T-cell (primary cell): ENCODE measurements at regions of chr4 and their contacts with region 1.

Region 1: DNA sequence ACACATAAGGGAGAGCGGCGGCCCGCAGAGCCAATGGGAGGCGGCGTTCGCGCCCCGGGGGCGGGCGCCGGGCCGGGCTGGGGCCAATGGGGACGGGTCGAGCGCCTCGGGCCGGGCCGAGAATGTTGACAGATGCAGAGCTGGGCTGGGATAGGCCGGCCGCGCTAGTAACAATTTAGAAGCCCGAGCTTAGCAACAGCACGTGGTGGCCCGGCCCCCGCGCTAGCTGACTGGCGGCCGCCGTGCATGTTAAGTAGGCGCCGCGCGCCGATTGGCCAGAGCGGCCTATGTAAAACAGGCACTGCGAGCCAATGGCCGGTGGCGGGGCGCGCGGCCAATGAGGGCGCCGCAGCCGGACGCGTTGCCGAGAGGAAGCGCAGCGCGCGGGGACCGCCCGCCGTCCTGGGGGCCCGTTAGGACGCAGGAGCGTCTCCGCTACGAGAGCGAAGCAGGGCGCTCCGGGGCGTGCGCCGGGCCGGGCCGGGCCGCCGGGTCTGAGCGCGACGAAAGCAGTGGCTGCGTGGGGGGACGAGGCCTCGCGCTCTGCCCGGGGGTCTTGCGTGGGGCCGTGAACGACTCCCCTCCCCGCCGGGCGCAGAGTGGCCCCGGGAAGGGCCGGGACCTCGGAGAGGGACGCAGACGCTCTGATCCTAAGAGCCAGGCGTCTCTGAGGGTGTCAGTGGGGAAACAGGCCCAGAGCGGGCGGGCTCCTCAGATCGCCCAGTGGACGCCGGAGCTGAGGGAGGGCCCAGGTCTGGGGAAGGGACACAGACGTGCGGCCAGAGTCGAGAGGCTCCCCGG is 434 bp upstream of the MXD4 start:
- DNase-seq: peak; percentile 96 to 100 (median 98)
- ATAC-seq: peak; percentile 89 to 90 (median 90)
- H3K4me3 ChIP-seq: peak overlapping the region; percentile 53 to 69
- H3K4me3 Mint-ChIP-seq: peak overlapping the region; percentile 68 to 77 (median 68)
- H3K27ac ChIP-seq: peak overlapping the region; percentile 91
- H3K27ac Mint-ChIP-seq: peak overlapping the region; percentile 67 to 82
- H3K4me1 ChIP-seq: peaks cover 6 to 51% of the 10 kb centered on the region in 2 experiments
- H3K4me1 Mint-ChIP-seq: peaks cover 0 to 15% (median 14%) of the 10 kb centered on the region in 3 donors
- H3K27me3 ChIP-seq: no peaks in the 10 kb centered on the region
- H3K27me3 Mint-ChIP-seq: no peaks in the 10 kb centered on the region

Region 2: GRCh38 chr4:2241410-2242353 is 20.7 kb before region 1 on chr4 and contains the starts of genes HAUS3 and POLN:
- CTCF ChIA-PET with region 1: interaction called in 1 of 2 experiments, 5 read pairs
- POLR2A ChIA-PET with region 1: interaction called in 1 of 2 experiments, 14 read pairs
- DNase-seq: peak; percentile 95 to 100 (median 98)
- ATAC-seq: peak; percentile 88 to 97 (median 94)
- H3K4me3 ChIP-seq: peak within 1 kb of the TSS; percentile 89 to 95
- H3K4me3 Mint-ChIP-seq: peak within 1 kb of the TSS; percentile 87 to 93 (median 92)
- H3K27ac ChIP-seq: peak within 1 kb of the TSS; percentile 77
- H3K27ac Mint-ChIP-seq: peak within 1 kb of the TSS; percentile 83 to 85
- H3K4me1 ChIP-seq: peaks cover 19 to 27% of the 10 kb centered on the region in 2 experiments
- H3K4me1 Mint-ChIP-seq: peaks cover 57 to 66% (median 63%) of the 10 kb centered on the region in 3 donors
- H3K27me3 ChIP-seq: no peaks in the 10 kb centered on the region
- H3K27me3 Mint-ChIP-seq: no peaks in the 10 kb centered on the region
- total RNA-seq, gene HAUS3: 29.3 to 94.0 (median 31.2) TPM
- total RNA-seq, gene POLN: 2.5 to 3.7 (median 2.7) TPM

Region 3: GRCh38 chr4:2281575-2282343 is 19.4 kb after region 1 on chr4:
- CTCF ChIA-PET with region 1: interaction called in 1 of 2 experiments, 17 read pairs
- POLR2A ChIA-PET with region 1: interaction called in 1 of 2 experiments, 11 read pairs
- DNase-seq: peak; percentile 59 to 97 (median 90)
- ATAC-seq: peak; percentile 93 to 97 (median 96)
- H3K4me3 ChIP-seq: peak overlapping the region in 1 of 2 donors; percentile 18
- H3K4me3 Mint-ChIP-seq: peak overlapping the region; percentile 52 to 82 (median 65)
- H3K27ac ChIP-seq: peak overlapping the region; percentile 96
- H3K27ac Mint-ChIP-seq: peak overlapping the region; percentile 98 to 99
- H3K4me1 ChIP-seq: peaks cover 20 to 63% of the 10 kb centered on the region in 2 experiments
- H3K4me1 Mint-ChIP-seq: peaks cover 34 to 56% (median 49%) of the 10 kb centered on the region in 3 donors
- H3K27me3 ChIP-seq: no peaks in the 10 kb centered on the region
- H3K27me3 Mint-ChIP-seq: no peaks in the 10 kb centered on the region

Region 4: DNA sequence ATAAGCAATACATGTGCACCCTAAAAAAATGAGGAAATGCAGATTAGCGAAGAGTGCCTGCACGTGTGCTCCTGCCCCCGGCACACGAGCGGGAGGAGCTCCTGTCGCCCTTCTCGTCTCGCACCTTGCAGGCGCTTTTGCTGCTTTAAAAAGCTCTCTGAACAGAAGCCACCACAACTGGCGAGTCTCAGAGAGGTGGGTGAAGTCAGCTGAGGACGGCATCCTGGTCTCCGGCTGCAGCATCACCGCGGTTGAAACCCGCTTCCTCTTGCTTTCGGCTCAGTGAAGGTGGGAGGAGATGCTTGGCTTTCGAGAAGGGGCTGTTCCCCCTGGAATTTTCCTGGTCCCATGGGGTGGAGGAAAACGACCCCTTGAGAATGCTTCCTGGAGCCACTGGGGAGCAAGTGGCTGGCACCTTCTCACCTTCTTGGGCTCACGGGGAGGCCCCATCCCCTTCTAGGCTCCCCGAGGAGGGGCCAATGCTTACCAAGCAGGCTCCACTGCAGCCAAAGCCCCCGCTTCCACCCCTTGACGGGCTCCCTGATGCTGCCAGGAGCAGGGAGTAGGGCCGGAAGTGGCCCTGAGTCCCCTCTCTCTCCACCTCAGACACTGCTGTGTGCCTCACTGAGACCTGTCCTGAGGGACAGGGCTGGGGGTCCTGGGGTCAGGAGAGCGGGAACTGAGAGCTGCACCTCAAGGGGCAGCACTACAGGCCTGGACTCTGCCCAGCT is 28.8 kb after region 1 on chr4:
- CTCF ChIA-PET with region 1: interaction called in 1 of 2 experiments, 3 read pairs
- POLR2A ChIA-PET with region 1: interaction called in 1 of 2 experiments, 13 read pairs
- DNase-seq: peak; percentile 48 to 93 (median 84)
- ATAC-seq: peak; percentile 92 to 94 (median 93)
- H3K4me3 ChIP-seq: peak overlapping the region; percentile 15 to 42
- H3K4me3 Mint-ChIP-seq: peak overlapping the region; percentile 56 to 79 (median 65)
- H3K27ac ChIP-seq: peak overlapping the region; percentile 96
- H3K27ac Mint-ChIP-seq: peak overlapping the region; percentile 96 to 98
- H3K4me1 ChIP-seq: peaks cover 32 to 68% of the 10 kb centered on the region in 2 experiments
- H3K4me1 Mint-ChIP-seq: peaks cover 42 to 60% (median 55%) of the 10 kb centered on the region in 3 donors
- H3K27me3 ChIP-seq: no peaks in the 10 kb centered on the region
- H3K27me3 Mint-ChIP-seq: no peaks in the 10 kb centered on the region